Activated naive CD4-positive, alpha-beta T cell treated with anti-CD3 and anti-CD28 coated beads for 36 hours (primary cell): ENCODE measurements at regions of chr1 and their contacts with region 1.

Region 1: DNA sequence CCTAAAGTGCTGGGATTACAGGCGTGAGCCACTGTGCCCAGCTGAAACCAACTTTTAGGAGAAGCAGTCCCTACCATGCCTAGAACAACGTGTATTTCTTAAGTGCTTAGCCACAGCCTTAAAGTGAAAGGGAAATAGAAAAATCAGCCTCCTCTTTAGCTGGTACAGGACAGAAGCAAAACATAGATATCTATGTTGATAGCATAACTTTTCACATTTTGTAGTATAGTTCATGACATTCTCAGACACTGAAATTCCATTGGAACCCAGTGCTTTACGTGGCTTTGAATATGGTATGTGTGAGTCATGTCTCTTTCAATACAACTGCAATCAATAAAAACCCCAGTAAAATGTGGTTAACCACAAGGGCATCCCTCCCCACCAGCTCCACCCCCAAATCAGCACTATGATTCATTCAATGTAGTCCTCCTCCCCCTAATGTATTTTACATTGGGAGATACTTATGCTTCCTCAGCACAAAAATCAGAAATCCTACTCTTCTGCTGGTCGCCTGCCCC is 32.1 kb downstream of the TGFB2 start:
- DNase-seq: peak; percentile 84
- H3K4me3 Mint-ChIP-seq: no peak overlapping the region
- H3K27ac Mint-ChIP-seq: no peak overlapping the region
- H3K4me1 Mint-ChIP-seq: peaks cover 16% of the 10 kb centered on the region
- H3K27me3 Mint-ChIP-seq: peaks cover 61% of the 10 kb centered on the region

Region 2: DNA sequence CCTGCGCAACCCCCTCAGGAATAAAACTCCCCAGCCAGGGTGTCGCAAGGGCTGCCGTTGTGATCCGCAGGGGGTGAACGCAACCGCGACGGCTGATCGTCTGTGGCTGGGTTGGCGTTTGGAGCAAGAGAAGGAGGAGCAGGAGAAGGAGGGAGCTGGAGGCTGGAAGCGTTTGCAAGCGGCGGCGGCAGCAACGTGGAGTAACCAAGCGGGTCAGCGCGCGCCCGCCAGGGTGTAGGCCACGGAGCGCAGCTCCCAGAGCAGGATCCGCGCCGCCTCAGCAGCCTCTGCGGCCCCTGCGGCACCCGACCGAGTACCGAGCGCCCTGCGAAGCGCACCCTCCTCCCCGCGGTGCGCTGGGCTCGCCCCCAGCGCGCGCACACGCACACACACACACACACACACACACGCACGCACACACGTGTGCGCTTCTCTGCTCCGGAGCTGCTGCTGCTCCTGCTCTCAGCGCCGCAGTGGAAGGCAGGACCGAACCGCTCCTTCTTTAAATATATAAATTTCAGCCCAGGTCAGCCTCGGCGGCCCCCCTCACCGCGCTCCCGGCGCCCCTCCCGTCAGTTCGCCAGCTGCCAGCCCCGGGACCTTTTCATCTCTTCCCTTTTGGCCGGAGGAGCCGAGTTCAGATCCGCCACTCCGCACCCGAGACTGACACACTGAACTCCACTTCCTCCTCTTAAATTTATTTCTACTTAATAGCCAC is 31.4 kb before region 1 on chr1:
- CTCF ChIA-PET with region 1: interaction called, 3 read pairs
- intact Hi-C with region 1: loop called (anchors 1 kb)
- DNase-seq: peak; percentile 17
- H3K4me3 Mint-ChIP-seq: no peak overlapping the region
- H3K27ac Mint-ChIP-seq: no peak overlapping the region
- H3K4me1 Mint-ChIP-seq: peaks cover 22% of the 10 kb centered on the region
- H3K27me3 Mint-ChIP-seq: peaks cover 55% of the 10 kb centered on the region

Region 3: GRCh38 chr1:218787826-218788225 is 410.6 kb after region 1 on chr1:
- CTCF ChIA-PET with region 1: no interaction called
- intact Hi-C with region 1: no loop called
- DNase-seq: no peak
- H3K4me3 Mint-ChIP-seq: no peak overlapping the region
- H3K27ac Mint-ChIP-seq: no peak overlapping the region
- H3K4me1 Mint-ChIP-seq: no peaks in the 10 kb centered on the region
- H3K27me3 Mint-ChIP-seq: no peaks in the 10 kb centered on the region

Region 4: GRCh38 chr1:219066631-219067349 is 689.6 kb after region 1 on chr1:
- CTCF ChIA-PET with region 1: no interaction called
- intact Hi-C with region 1: loop called (anchors 10 kb)
- DNase-seq: no peak
- H3K4me3 Mint-ChIP-seq: no peak overlapping the region
- H3K27ac Mint-ChIP-seq: no peak overlapping the region
- H3K4me1 Mint-ChIP-seq: peaks cover 7% of the 10 kb centered on the region
- H3K27me3 Mint-ChIP-seq: peaks cover 5% of the 10 kb centered on the region

Region 5: GRCh38 chr1:219324629-219325367 is 947.6 kb after region 1 on chr1:
- CTCF ChIA-PET with region 1: no interaction called
- intact Hi-C with region 1: loop called (anchors 5 kb)
- DNase-seq: peak; percentile 30
- H3K4me3 Mint-ChIP-seq: no peak overlapping the region
- H3K27ac Mint-ChIP-seq: no peak overlapping the region
- H3K4me1 Mint-ChIP-seq: peaks cover 9% of the 10 kb centered on the region
- H3K27me3 Mint-ChIP-seq: peaks cover 4% of the 10 kb centered on the region